OCI-LY7 (cell line): ENCODE measurements at regions of chr18 and their contacts with region 1.

Region 1: GRCh38 chr18:27824841-27825681 is 351.9 kb downstream of the CDH2 start:
- DNase-seq: no peak
- H3K4me3 ChIP-seq: no peak overlapping the region
- H3K27ac ChIP-seq: no peak overlapping the region
- H3K4me1 ChIP-seq: no peaks in the 10 kb centered on the region
- CTCF ChIP-seq: no peak

Region 2: GRCh38 chr18:27887287-27887686 is 62.2 kb after region 1 on chr18:
- CTCF ChIA-PET with region 1: no interaction called
- POLR2A ChIA-PET with region 1: no interaction called
- intact Hi-C with region 1: loop called (anchors 10 kb)
- DNase-seq: no peak
- H3K4me3 ChIP-seq: no peak overlapping the region
- H3K27ac ChIP-seq: no peak overlapping the region
- H3K4me1 ChIP-seq: no peaks in the 10 kb centered on the region
- CTCF ChIP-seq: no peak